Aorta (tissue), 5 donors: ENCODE measurements at regions of chr5 and their contacts with region 1.

Region 1: GRCh38 chr5:111063700-111064322 is 7.7 kb upstream of the TSLP start:
- DNase-seq: no peak
- ATAC-seq: no peak
- H3K4me3 ChIP-seq: no peak overlapping the region
- H3K27ac ChIP-seq: no peak overlapping the region
- H3K4me1 ChIP-seq: no peaks in the 10 kb centered on the region
- H3K27me3 ChIP-seq: no peaks in the 10 kb centered on the region

Region 2: GRCh38 chr5:110757118-110757729 is 306.6 kb before region 1 on chr5:
- intact Hi-C with region 1: loop called in 1 of 2 experiments (anchors 10 kb)
- DNase-seq: no peak
- ATAC-seq: no peak
- H3K4me3 ChIP-seq: no peak overlapping the region
- H3K27ac ChIP-seq: no peak overlapping the region
- H3K4me1 ChIP-seq: no peaks in the 10 kb centered on the region
- H3K27me3 ChIP-seq: no peaks in the 10 kb centered on the region

Region 3: GRCh38 chr5:110790673-110791072 is 273.1 kb before region 1 on chr5:
- intact Hi-C with region 1: loop called in 1 of 2 experiments (anchors 5 kb)
- DNase-seq: no peak
- ATAC-seq: no peak
- H3K4me3 ChIP-seq: no peak overlapping the region
- H3K27ac ChIP-seq: no peak overlapping the region
- H3K4me1 ChIP-seq: no peaks in the 10 kb centered on the region
- H3K27me3 ChIP-seq: no peaks in the 10 kb centered on the region

Region 4: GRCh38 chr5:111075520-111075919 is 11.7 kb after region 1 on chr5:
- intact Hi-C with region 1: no loop called
- DNase-seq: no peak
- ATAC-seq: no peak
- H3K4me3 ChIP-seq: no peak overlapping the region
- H3K27ac ChIP-seq: no peak overlapping the region
- H3K4me1 ChIP-seq: peaks cover 0 to 5% of the 10 kb centered on the region in 2 donors
- H3K27me3 ChIP-seq: no peaks in the 10 kb centered on the region

Region 5: GRCh38 chr5:111394580-111394979 is 330.8 kb after region 1 on chr5:
- intact Hi-C with region 1: no loop called
- DNase-seq: no peak
- ATAC-seq: no peak
- H3K4me3 ChIP-seq: no peak overlapping the region
- H3K27ac ChIP-seq: no peak overlapping the region
- H3K4me1 ChIP-seq: no peaks in the 10 kb centered on the region
- H3K27me3 ChIP-seq: peaks cover 0 to 1% of the 10 kb centered on the region in 2 donors